ENCODE measurements at regions of chr12 and their contacts with region 1.

Region 1: GRCh38 chr12:32586390-32586789 is 92.7 kb upstream of the DNM1L start:
- DNase-seq: peak; percentile 84
- H3K4me3 ChIP-seq: no peak overlapping the region
- H3K27ac ChIP-seq: no peak overlapping the region
- H3K4me1 ChIP-seq: peaks cover 20% of the 10 kb centered on the region
- H3K27me3 ChIP-seq: no peaks in the 10 kb centered on the region
- CTCF ChIP-seq: no peak

Region 2: GRCh38 chr12:32533971-32534590 is 52.3 kb before region 1 on chr12:
- CTCF ChIA-PET with region 1: interaction called, 3 read pairs
- dilution Hi-C with region 1: loop called (anchors 10 kb)
- in situ Hi-C with region 1: no loop called
- intact Hi-C with region 1: loop called (anchors 5 kb)
- DNase-seq: peak; percentile 73
- H3K4me3 ChIP-seq: peak overlapping the region in 2 of 3 experiments; percentile 43 to 45
- H3K27ac ChIP-seq: peak overlapping the region; percentile 50
- H3K4me1 ChIP-seq: peaks cover 36% of the 10 kb centered on the region
- H3K27me3 ChIP-seq: no peaks in the 10 kb centered on the region
- CTCF ChIP-seq: no peak

Region 3: DNA sequence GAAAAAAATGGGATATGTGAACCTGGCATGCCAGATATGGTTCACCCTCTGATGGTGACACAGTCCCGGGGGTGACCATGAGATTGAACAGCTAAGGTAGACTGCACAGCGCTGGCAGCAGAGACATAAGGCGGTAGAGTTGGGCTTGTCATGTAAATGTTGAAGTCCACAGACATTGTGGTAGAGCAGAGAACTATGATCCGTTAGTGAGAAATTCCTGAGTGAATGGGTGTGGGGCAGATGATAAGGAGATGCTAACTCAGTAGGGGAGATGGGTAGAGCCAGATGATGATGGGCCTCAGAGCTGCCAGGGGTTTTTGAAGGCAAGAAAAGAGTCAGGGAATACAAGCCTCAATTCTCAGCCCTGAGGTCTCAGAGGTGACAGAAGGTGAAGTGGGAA is 41.6 kb after region 1 on chr12:
- CTCF ChIA-PET with region 1: interaction called, 13 read pairs
- dilution Hi-C with region 1: no loop called
- in situ Hi-C with region 1: no loop called
- intact Hi-C with region 1: no loop called
- DNase-seq: no peak
- H3K4me3 ChIP-seq: no peak overlapping the region
- H3K27ac ChIP-seq: no peak overlapping the region
- H3K4me1 ChIP-seq: no peaks in the 10 kb centered on the region
- H3K27me3 ChIP-seq: no peaks in the 10 kb centered on the region
- CTCF ChIP-seq: no peak

Measured in mammary epithelial cell (primary cell).